ENCODE measurements at regions of chr1 and their contacts with region 1.

Region 1: DNA sequence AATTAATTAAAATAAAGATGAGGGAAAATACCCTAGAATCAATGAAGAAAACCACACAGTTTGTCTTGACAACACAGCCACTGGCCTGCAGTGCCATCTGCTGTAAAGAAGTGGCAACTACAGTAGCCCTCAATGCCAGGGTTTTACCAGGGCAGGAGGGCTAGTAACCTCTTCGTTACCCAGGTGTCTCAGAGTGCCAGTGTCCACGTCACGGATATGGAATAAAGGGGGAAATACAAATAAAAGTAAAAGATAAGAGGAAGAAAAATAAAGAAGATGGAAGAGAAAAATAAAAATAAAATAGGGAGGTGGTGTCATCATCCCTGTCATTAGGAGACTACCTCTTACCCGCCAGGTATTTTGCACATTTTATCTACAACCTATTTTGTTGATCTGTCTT is 14.2 kb upstream of the SLC44A3 start:
- DNase-seq: peak; percentile 77
- ATAC-seq: peak; percentile 36; the same call in 1 of the 2 replicates
- H3K4me3 ChIP-seq: no peak overlapping the region
- H3K27ac ChIP-seq: no peak overlapping the region
- H3K4me1 ChIP-seq: peaks cover 6% of the 10 kb centered on the region
- H3K27me3 ChIP-seq: no peaks in the 10 kb centered on the region
- CTCF ChIP-seq: peak; percentile 92

Region 2: GRCh38 chr1:94481473-94481933 is 324.4 kb before region 1 on chr1:
- CTCF ChIA-PET with region 1: no interaction called
- POLR2A ChIA-PET with region 1: no interaction called
- intact Hi-C with region 1: loop called (anchors 1 kb)
- DNase-seq: peak; percentile 80
- ATAC-seq: peak; percentile 98
- H3K4me3 ChIP-seq: no peak overlapping the region
- H3K27ac ChIP-seq: no peak overlapping the region
- H3K4me1 ChIP-seq: no peaks in the 10 kb centered on the region
- H3K27me3 ChIP-seq: no peaks in the 10 kb centered on the region
- CTCF ChIP-seq: peak; percentile 80

Region 3: DNA sequence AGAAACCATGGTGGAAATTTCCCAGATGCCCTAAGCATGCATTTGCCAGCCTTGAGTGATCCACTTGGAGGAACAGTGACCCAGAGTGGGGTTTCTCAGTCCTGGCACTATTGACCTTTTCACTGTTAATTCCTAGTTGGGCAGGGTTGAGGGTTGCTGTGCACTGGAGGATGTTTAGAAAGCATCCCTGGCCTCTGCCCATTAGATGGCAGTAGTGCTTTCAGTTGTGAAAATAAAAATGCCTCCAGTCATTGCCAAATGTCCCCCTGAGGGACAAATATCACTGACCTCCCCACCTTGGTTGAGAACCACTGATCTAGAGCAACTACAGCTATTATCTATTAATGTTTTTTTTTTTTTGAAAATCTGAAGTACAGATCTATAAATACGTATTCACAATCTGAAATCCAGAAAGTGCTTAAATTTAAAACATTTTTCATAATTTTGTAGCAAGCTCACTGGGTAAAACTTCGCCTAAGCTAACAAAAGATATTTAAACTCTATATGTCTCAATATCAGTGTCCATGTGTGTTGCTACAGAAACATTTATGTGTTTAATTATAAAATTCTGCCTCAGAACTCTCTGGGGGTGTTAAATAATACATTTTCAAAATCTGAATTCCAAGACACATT is 291.7 kb before region 1 on chr1:
- CTCF ChIA-PET with region 1: no interaction called
- POLR2A ChIA-PET with region 1: no interaction called
- intact Hi-C with region 1: loop called (anchors 1 kb)
- DNase-seq: peak; percentile 53
- ATAC-seq: peak; percentile 63; the same call in 1 of the 2 replicates
- H3K4me3 ChIP-seq: no peak overlapping the region
- H3K27ac ChIP-seq: no peak overlapping the region
- H3K4me1 ChIP-seq: no peaks in the 10 kb centered on the region
- H3K27me3 ChIP-seq: no peaks in the 10 kb centered on the region
- CTCF ChIP-seq: peak; percentile 85

Region 4: GRCh38 chr1:94532077-94532476 is 273.8 kb before region 1 on chr1:
- CTCF ChIA-PET with region 1: interaction called, 4 read pairs
- POLR2A ChIA-PET with region 1: no interaction called
- intact Hi-C with region 1: loop called (anchors 1 kb)
- DNase-seq: peak; percentile 67
- ATAC-seq: peak; percentile 93
- H3K4me3 ChIP-seq: no peak overlapping the region
- H3K27ac ChIP-seq: no peak overlapping the region
- H3K4me1 ChIP-seq: peaks cover 15% of the 10 kb centered on the region; the same call in 1 of the 2 replicates
- H3K27me3 ChIP-seq: no peaks in the 10 kb centered on the region
- CTCF ChIP-seq: peak; percentile 62

Measured in PC-3 (cell line).